Gastrocnemius medialis (tissue), 4 donors: ENCODE measurements at regions of chr14 and their contacts with region 1.

Region 1: DNA sequence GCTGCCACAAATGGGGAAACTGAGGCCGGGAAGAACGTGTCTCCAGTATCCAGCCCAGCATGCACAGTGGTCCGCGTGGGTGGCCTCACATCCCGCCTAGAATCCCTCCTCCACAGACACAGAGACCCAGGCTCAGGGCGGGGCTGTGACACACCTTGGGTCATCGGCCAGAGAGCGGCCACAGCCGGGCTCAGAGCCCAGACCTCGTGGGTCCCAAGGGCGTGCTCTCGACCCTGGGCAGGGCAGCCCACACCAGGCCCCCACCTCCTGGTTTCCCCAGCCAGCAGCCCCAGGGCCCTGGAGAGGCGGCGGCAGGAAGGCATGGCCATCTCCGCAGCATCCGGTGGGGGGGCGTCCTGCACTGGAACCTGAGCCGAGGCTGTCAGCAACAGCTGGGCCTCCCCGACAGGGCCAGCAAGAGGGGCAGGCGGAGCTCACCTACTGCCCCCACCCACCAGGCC is 15.3 kb downstream of the JAG2 start:
- DNase-seq: peak in 1 of 2 donors; percentile 66
- ATAC-seq: peak; percentile 40 to 43
- H3K4me3 ChIP-seq: no peak overlapping the region
- H3K27ac ChIP-seq: peak overlapping the region; percentile 91 to 98 (median 94)
- H3K4me1 ChIP-seq: peaks cover 22 to 33% of the 10 kb centered on the region in 2 donors
- H3K27me3 ChIP-seq: no peaks in the 10 kb centered on the region
- CTCF ChIP-seq: no peak
- POLR2A ChIP-seq: no peak

Region 2: DNA sequence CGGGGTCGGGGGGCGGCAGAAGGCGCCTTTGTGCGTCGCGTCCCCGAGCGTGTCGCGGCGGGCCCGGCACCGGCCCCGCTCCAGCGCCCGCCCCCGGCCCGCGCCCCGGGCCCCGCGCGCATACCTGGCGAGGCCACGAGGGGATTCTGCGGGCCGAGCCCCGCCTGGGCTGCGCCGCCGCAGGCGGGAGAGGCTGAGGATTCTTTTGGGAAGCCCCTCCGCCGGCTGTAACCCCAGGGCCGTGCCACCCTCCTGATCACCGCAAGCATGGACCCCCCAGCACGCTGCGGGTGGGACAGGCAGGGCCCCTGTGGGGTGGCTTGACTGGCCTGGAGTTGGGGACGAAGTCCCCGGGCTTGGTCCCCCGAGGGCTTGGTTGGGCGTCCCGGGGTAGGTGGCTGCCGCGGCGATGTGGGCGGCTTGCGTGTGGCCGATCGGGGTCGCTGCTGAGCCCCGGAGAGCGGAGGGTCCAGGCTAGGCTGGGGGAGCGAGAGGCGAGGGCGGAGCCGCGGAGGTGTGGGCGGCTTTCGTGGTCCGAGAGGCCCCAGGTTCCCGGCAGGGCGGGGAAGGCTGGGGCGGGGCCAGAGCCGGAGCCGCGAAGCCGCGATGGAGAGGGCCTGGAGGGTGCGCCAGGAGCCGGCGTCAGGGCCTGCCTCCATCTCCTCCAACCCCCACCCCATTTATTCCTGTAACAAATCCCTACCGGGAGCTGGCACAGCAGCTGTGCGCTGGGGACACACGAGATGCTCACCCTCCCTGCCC is 59.7 kb before region 1 on chr14:
- in situ Hi-C with region 1: no loop called
- intact Hi-C with region 1: loop called (anchors 5 kb)
- DNase-seq: no peak
- ATAC-seq: no peak
- H3K4me3 ChIP-seq: peak overlapping the region; percentile 49 to 66 (median 58)
- H3K27ac ChIP-seq: peak overlapping the region; percentile 24 to 64 (median 46)
- H3K4me1 ChIP-seq: peaks cover 3 to 33% of the 10 kb centered on the region in 2 donors
- H3K27me3 ChIP-seq: peaks cover 3 to 8% (median 7%) of the 10 kb centered on the region in 3 donors
- CTCF ChIP-seq: no peak
- POLR2A ChIP-seq: no peak

Region 3: DNA sequence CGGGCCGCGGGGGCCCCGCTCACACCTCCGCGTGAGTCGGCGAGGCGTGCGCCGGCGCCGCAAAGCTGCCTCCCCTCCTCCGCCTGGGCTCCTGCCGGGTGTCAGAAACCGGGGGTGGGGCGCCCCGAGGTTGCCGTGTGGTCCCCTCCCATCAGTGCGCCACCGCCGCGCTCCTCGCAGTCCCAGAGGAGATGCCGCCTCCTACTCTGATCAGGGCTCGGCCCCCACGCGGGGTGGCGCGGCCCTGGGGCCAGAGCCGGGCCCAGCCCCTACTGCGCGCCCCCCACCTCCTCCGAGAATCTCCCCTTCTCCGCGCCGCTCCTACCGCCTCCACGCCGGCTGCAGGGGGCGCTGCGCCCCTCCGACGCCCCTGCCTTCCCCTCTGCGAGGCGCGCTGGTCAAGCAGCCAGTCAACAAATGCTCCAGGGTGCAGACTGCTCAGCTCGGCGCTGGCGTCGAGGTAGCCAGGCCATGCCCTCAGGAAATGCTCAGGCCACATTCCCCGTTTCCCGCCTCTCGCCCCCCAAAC is 15.7 kb after region 1 on chr14:
- in situ Hi-C with region 1: no loop called
- intact Hi-C with region 1: loop called (anchors 2 kb)
- DNase-seq: no peak
- ATAC-seq: peak; percentile 5 to 13
- H3K4me3 ChIP-seq: peak overlapping the region; percentile 38 to 57 (median 44)
- H3K27ac ChIP-seq: peak overlapping the region; percentile 76 to 83 (median 80)
- H3K4me1 ChIP-seq: peaks cover 49 to 58% of the 10 kb centered on the region in 2 donors
- H3K27me3 ChIP-seq: no peaks in the 10 kb centered on the region
- CTCF ChIP-seq: peak in 4 of 5 experiments; percentile 44 to 60 (median 56)
- POLR2A ChIP-seq: peak in 1 of 2 donors; percentile 19

Region 4: DNA sequence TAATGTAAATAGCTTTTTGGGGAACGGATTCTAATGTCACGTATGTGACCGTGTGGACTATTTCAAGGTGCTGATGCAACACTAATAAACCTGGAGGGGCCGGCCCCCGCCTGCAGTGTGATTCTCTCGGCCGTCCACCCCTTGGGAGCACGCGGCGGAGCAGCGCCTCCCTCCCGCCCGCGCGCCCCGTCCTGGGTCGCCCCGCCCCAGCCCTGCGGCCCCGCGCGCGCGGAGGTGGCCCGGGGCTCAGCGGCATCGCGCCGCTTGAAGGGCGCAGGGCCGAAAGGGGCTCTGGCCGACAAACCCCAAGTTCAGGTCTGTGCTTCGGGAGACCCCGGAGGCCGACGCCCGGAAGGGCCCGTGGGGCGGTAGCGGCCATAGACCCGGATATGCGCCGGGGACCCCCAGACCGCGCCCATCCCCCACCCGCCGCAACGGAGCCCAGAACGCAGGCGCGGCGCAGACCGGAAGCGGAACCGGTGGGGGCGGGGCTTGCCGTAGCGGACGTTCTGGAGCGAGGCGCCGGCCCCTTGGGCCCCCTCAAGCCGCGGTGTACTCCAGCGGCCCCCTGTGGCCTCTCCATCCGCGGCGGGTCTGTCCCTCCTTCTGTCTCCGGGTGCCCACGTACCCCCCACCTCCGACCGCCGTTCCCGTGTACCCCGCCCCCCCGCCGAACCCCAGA is 244.9 kb after region 1 on chr14 and contains the start of gene TEX22:
- in situ Hi-C with region 1: no loop called
- intact Hi-C with region 1: no loop called
- DNase-seq: peak; percentile 78 to 82
- ATAC-seq: peak; percentile 85 to 91
- H3K4me3 ChIP-seq: peak within 1 kb of the TSS; percentile 70 to 100 (median 94)
- H3K27ac ChIP-seq: peak within 1 kb of the TSS; percentile 79 to 94 (median 90)
- H3K4me1 ChIP-seq: peaks cover 17 to 19% of the 10 kb centered on the region in 2 donors
- H3K27me3 ChIP-seq: no peaks in the 10 kb centered on the region
- CTCF ChIP-seq: peak in 2 of 5 experiments; percentile 36 to 45
- POLR2A ChIP-seq: peak; percentile 66 to 81
- total RNA-seq, gene TEX22: not detected